ENCODE measurements at regions of chr9 and their contacts with region 1.

Region 1: GRCh38 chr9:136847088-136847826 is 2.0 kb upstream of the PHPT1 start:
- DNase-seq: no peak
- H3K4me3 ChIP-seq: peak overlapping the region in 50 of 59 donors; percentile 52 to 88 (median 77)
- H3K27ac ChIP-seq: peak overlapping the region in 43 of 59 donors; percentile 59 to 95 (median 89)
- H3K27me3 ChIP-seq: peaks cover 0 to 4% (median 0%) of the 10 kb centered on the region in 45 donors
- CTCF ChIP-seq: no peak

Region 2: GRCh38 chr9:136807281-136808074 is 39.8 kb before region 1 on chr9 and contains the start of gene RABL6:
- intact Hi-C with region 1: loop called (anchors 1 to 2 kb)
- DNase-seq: peak in 9 of 10 donors; percentile 43 to 87 (median 60)
- H3K4me3 ChIP-seq: peak within 1 kb of the TSS; percentile 66 to 99 (median 88)
- H3K27ac ChIP-seq: peak within 1 kb of the TSS; percentile 53 to 99 (median 92)
- H3K27me3 ChIP-seq: no peaks in the 10 kb centered on the region
- CTCF ChIP-seq: peak in 9 of 56 donors; percentile 7 to 41 (median 19)
- total RNA-seq, gene RABL6: 86.8 to 178 (median 121) TPM

Region 3: DNA sequence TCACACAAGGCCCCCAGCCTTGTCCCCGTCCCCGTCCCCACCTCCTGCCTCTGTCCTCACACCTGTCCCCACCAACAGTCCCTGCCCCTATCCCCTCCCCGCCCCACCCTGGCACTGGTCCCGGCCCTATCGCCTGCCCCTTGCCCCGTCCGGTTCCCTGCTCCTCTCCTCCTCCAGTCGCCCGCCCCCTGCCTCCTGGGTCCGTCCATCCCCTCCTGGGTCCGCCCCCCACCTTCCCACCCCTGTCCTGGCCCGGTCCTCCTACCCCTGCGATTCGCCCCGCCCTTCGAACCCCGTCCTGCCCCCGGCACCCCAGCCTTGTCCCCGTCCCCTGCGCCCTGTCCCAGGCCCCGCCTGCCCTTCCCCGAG is 18.5 kb after region 1 on chr9:
- intact Hi-C with region 1: loop called in 1 of 2 experiments (anchors 2 kb)
- DNase-seq: peak in 1 of 10 donors; percentile 41
- H3K4me3 ChIP-seq: peak overlapping the region; percentile 45 to 97 (median 82)
- H3K27ac ChIP-seq: peak overlapping the region in 51 of 59 donors; percentile 21 to 93 (median 79)
- H3K27me3 ChIP-seq: no peaks in the 10 kb centered on the region
- CTCF ChIP-seq: no peak

Region 4: GRCh38 chr9:137129456-137130175 is 282.4 kb after region 1 on chr9:
- intact Hi-C with region 1: no loop called
- DNase-seq: peak; percentile 70 to 92 (median 86)
- H3K4me3 ChIP-seq: peak overlapping the region; percentile 54 to 88 (median 78)
- H3K27ac ChIP-seq: peak overlapping the region in 55 of 59 donors; percentile 24 to 89 (median 73)
- H3K27me3 ChIP-seq: peaks cover 0 to 18% (median 0%) of the 10 kb centered on the region in 45 donors
- CTCF ChIP-seq: peak in 9 of 56 donors; percentile 9 to 38 (median 20)

Region 5: GRCh38 chr9:137502008-137502913 is 655.0 kb after region 1 on chr9:
- intact Hi-C with region 1: no loop called
- DNase-seq: no peak
- H3K4me3 ChIP-seq: no peak overlapping the region
- H3K27ac ChIP-seq: no peak overlapping the region
- H3K27me3 ChIP-seq: no peaks in the 10 kb centered on the region
- CTCF ChIP-seq: no peak

Measured in dorsolateral prefrontal cortex (tissue), 120 donors.